Psoas muscle (tissue), 8 donors: ENCODE measurements at regions of chr5 and their contacts with region 1.

Region 1: GRCh38 chr5:135887351-135887864 is 8.2 kb downstream of the IL9 start:
- DNase-seq: peak; percentile 35 to 58
- ATAC-seq: peak; percentile 83 to 94 (median 92)
- H3K4me3 ChIP-seq: no peak overlapping the region
- H3K27ac ChIP-seq: no peak overlapping the region
- H3K4me1 ChIP-seq: no peaks in the 10 kb centered on the region
- H3K27me3 ChIP-seq: no peaks in the 10 kb centered on the region
- CTCF ChIP-seq: peak; percentile 91

Region 2: GRCh38 chr5:136062366-136063274 is 175.2 kb after region 1 on chr5:
- intact Hi-C with region 1: loop called (anchors 5 to 10 kb)
- DNase-seq: no peak
- ATAC-seq: peak; percentile 41 to 63 (median 54)
- H3K4me3 ChIP-seq: no peak overlapping the region
- H3K27ac ChIP-seq: no peak overlapping the region
- H3K4me1 ChIP-seq: no peaks in the 10 kb centered on the region
- H3K27me3 ChIP-seq: no peaks in the 10 kb centered on the region
- CTCF ChIP-seq: peak; percentile 60

Region 3: GRCh38 chr5:136080483-136081216 is 193.2 kb after region 1 on chr5:
- intact Hi-C with region 1: loop called in 1 of 2 experiments (anchors 1 kb)
- DNase-seq: peak; percentile 85 to 94
- ATAC-seq: peak; percentile 63 to 94 (median 74)
- H3K4me3 ChIP-seq: peak overlapping the region; percentile 31
- H3K27ac ChIP-seq: peak overlapping the region; percentile 39
- H3K4me1 ChIP-seq: peaks cover 5% of the 10 kb centered on the region
- H3K27me3 ChIP-seq: no peaks in the 10 kb centered on the region
- CTCF ChIP-seq: no peak

Region 4: GRCh38 chr5:136212252-136212721 is 324.9 kb after region 1 on chr5:
- intact Hi-C with region 1: loop called (anchors 1 to 2 kb)
- DNase-seq: peak; percentile 44 to 80
- ATAC-seq: peak; percentile 67 to 76 (median 71)
- H3K4me3 ChIP-seq: no peak overlapping the region
- H3K27ac ChIP-seq: no peak overlapping the region
- H3K4me1 ChIP-seq: no peaks in the 10 kb centered on the region
- H3K27me3 ChIP-seq: peaks cover 0 to 6% (median 2%) of the 10 kb centered on the region in 3 donors
- CTCF ChIP-seq: peak; percentile 84

Region 5: DNA sequence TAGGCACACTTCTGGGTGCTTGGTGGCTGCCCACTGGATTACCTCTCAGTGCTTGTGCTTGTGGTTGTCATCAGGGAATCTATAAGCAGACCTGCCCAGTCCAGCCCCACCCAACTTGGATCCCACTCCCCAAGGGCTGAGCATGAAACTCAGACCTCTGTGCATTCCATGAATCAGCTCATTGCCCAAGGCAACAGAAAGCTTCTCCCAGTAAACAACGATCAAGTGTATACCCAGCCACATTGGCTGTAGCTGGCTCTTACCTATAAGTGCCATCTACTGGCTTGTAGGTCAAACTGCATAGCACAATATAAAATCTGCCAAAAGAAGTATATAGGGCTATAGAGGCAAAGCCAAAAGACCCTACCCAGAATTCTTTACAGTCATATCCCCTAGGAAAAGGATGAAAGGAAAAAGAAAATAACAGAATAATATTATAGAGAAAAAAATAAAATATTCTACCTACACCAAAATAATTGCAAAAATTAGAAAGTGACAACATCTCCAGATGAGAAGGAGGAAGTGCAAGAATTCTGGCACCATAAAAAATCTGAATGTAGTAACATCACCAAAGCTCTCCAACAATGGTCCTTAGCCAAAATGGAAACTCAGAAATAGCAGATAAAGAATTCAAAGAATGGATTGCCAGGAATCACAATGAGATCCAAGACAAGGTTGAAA is 798.9 kb after region 1 on chr5:
- intact Hi-C with region 1: no loop called
- DNase-seq: no peak
- ATAC-seq: no peak
- H3K4me3 ChIP-seq: no peak overlapping the region
- H3K27ac ChIP-seq: no peak overlapping the region
- H3K4me1 ChIP-seq: no peaks in the 10 kb centered on the region
- H3K27me3 ChIP-seq: no peaks in the 10 kb centered on the region
- CTCF ChIP-seq: peak; percentile 9